Endothelial cell of umbilical vein (primary cell): ENCODE measurements at regions of chr6 and their contacts with region 1.

Region 1: GRCh38 chr6:134288538-134289203 is 29.2 kb downstream of the SGK1 start:
- DNase-seq: peak; percentile 74
- H3K4me3 ChIP-seq: no peak overlapping the region
- H3K27ac ChIP-seq: peak overlapping the region; percentile 100
- H3K4me1 ChIP-seq: peaks cover 25% of the 10 kb centered on the region
- H3K27me3 ChIP-seq: no peaks in the 10 kb centered on the region
- CTCF ChIP-seq: no peak
- POLR2A ChIP-seq: peak; percentile 30

Region 2: DNA sequence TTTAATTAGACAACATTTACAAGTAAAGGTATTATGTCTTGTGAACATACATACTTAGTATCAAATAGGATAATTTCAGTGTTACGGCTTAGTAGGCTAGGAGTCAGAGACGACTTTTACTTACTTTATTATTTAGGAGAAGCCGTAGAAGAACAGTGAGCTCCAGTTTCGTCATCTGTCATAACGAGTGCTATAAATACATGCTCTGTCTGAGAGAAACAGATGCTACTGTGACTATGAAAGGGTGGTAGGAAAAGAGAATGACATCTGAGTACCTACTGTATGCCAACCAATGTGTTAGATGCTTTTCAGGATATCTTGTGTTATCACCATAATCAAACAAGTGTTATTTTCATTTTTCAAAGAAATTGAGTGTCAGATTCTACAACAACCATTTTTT is 928.5 kb before region 1 on chr6:
- CTCF ChIA-PET with region 1: no interaction called
- POLR2A ChIA-PET with region 1: no interaction called
- dilution Hi-C with region 1: no loop called
- intact Hi-C with region 1: no loop called
- DNase-seq: no peak
- H3K4me3 ChIP-seq: no peak overlapping the region
- H3K27ac ChIP-seq: no peak overlapping the region
- H3K4me1 ChIP-seq: no peaks in the 10 kb centered on the region
- H3K27me3 ChIP-seq: no peaks in the 10 kb centered on the region
- CTCF ChIP-seq: no peak
- POLR2A ChIP-seq: no peak

Region 3: DNA sequence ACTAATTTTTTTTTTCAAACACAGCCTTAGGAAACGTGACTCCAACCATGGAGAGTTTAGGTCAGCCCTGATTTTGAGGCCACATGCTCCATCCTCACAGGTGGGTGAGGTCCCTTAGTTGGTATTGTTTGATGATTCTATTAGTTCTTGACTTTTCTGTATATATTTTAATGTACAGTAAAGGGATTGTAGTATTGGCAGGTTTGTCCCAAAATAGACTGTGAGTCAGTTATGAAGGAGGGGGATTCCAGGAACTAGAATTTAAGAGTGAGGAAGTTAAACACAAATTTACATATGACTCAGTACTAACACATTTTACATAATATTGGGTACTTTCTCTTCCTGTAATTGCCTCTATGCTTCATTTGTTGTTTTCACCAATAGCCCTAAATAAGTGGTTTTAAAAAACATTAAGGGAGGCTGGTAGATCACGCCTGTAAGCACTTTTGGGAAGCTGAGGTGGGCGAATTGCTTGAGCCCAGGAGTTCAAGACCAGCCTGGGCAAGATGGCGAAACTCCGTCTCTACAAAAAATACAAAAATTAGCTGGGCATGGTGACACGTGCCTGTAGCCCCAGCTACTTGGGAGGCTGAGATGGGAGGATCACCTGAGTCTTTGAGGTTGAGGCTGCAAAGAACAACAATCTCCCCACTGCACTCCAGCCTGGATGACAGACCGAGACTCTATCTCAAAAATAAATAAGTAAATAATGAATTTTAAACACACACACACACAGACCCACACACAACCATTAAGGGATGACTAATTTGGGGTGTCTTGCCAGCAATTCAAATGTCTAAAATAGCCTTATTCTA is 52.5 kb before region 1 on chr6:
- CTCF ChIA-PET with region 1: no interaction called
- POLR2A ChIA-PET with region 1: no interaction called
- dilution Hi-C with region 1: no loop called
- intact Hi-C with region 1: loop called (anchors 1 kb)
- DNase-seq: peak; percentile 67
- H3K4me3 ChIP-seq: no peak overlapping the region
- H3K27ac ChIP-seq: peak overlapping the region; percentile 74
- H3K4me1 ChIP-seq: peaks cover 10% of the 10 kb centered on the region
- H3K27me3 ChIP-seq: no peaks in the 10 kb centered on the region
- CTCF ChIP-seq: no peak
- POLR2A ChIP-seq: no peak